ENCODE measurements at regions of chr13 and their contacts with region 1.

Region 1: GRCh38 chr13:79405829-79406596 is at the start of gene RBM26:
- DNase-seq: peak; percentile 95
- H3K4me3 ChIP-seq: peak within 1 kb of the TSS; percentile 98
- H3K27ac ChIP-seq: peak within 1 kb of the TSS; percentile 94
- H3K4me1 ChIP-seq: peaks cover 37% of the 10 kb centered on the region
- CTCF ChIP-seq: 0 out of 2 replicates have a peak, but pooled peaks have one; percentile 27
- total RNA-seq, gene RBM26: 44.1 and 46.1 TPM in 2 replicates

Region 2: GRCh38 chr13:78658635-78659449 is 747.2 kb before region 1 on chr13 and contains the start of gene OBI1:
- CTCF ChIA-PET with region 1: no interaction called
- POLR2A ChIA-PET with region 1: no interaction called
- intact Hi-C with region 1: loop called (anchors 5 kb)
- DNase-seq: peak; percentile 90
- H3K4me3 ChIP-seq: peak within 1 kb of the TSS; percentile 93
- H3K27ac ChIP-seq: peak within 1 kb of the TSS; percentile 75
- H3K4me1 ChIP-seq: peaks cover 18% of the 10 kb centered on the region
- CTCF ChIP-seq: no peak
- total RNA-seq, gene OBI1: 17.9 and 18.0 TPM in 2 replicates

Region 3: DNA sequence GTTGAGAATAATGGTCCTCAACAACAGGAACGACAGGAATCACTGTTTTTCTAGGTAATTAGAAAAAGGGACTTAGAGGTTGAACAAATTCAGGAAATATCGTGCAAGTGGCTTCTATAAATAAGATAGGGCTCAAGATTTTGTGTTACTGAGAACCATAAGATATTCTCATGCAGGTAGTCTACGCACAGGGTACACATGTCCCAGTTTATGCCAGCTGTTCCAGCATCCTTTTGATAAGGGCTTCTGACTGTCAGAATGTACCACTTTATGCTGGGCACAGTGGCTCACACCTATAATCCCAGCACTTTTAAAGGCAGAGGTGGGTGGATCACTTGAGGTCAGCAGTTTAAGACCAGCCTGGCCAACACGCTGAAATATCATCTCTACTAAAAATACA is 32.1 kb before region 1 on chr13:
- CTCF ChIA-PET with region 1: no interaction called
- POLR2A ChIA-PET with region 1: no interaction called
- intact Hi-C with region 1: no loop called
- DNase-seq: no peak
- H3K4me3 ChIP-seq: no peak overlapping the region
- H3K27ac ChIP-seq: no peak overlapping the region
- H3K4me1 ChIP-seq: no peaks in the 10 kb centered on the region
- CTCF ChIP-seq: no peak

Region 4: DNA sequence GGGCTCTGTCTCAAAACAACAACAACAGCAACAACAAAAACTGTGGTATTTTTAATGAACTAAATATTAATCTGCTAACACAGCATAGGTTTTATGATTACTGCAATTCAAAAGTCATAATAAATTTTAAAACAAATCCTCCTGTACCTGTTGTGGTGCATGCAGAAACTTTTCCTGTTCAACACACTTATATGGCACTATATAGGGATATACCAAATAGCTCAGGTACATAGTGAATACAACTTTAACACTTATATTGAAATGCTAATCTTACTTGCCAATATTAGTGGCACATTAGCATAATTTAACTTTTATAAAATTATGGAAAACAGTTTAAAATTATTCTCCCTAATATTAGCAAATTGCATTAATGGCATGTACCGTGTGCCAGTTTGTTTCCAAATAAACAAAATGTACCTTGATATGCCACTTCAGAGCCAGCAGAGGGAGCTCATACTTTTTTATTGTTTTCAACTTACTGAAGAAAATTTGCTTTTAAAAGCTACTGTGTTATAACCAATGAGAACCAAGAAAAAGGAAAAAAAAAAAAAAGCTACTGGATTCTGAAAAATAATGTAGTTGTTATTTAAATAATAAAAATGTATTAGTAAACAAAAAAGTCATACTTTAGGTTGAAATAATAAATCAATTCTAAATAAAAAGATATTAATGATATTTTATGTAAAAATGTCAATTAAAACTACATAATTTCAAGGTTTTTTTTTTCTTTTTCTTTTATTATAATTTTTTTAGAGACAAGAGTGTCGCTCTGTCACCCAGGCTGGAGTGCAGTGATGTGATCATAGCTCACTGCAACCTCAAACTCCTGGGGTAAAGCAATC is 18.0 kb after region 1 on chr13:
- CTCF ChIA-PET with region 1: interaction called, 4 read pairs
- POLR2A ChIA-PET with region 1: interaction called, 19 read pairs
- intact Hi-C with region 1: no loop called
- DNase-seq: peak; percentile 54
- H3K4me3 ChIP-seq: no peak overlapping the region
- H3K27ac ChIP-seq: no peak overlapping the region
- H3K4me1 ChIP-seq: no peaks in the 10 kb centered on the region
- CTCF ChIP-seq: peak; percentile 89